CD4-positive, alpha-beta memory T cell (primary cell): ENCODE measurements at regions of chrX and their contacts with region 1.

Region 1: GRCh38 chrX:48043056-48043455 is 28.4 kb downstream of the ZNF630 start:
- DNase-seq: no peak
- H3K4me3 ChIP-seq: no peak overlapping the region
- H3K4me3 Mint-ChIP-seq: no peak overlapping the region
- H3K27ac ChIP-seq: no peak overlapping the region
- H3K27ac Mint-ChIP-seq: no peak overlapping the region
- H3K4me1 ChIP-seq: no peaks in the 10 kb centered on the region
- H3K4me1 Mint-ChIP-seq: peaks cover 0 to 2% (median 0%) of the 10 kb centered on the region in 4 donors
- H3K27me3 ChIP-seq: no peaks in the 10 kb centered on the region
- H3K27me3 Mint-ChIP-seq: no peaks in the 10 kb centered on the region

Region 2: GRCh38 chrX:48028091-48028490 is 15.0 kb before region 1 on chrX:
- CTCF ChIA-PET with region 1: interaction called, 11 read pairs
- POLR2A ChIA-PET with region 1: no interaction called
- intact Hi-C with region 1: no loop called
- DNase-seq: no peak
- H3K4me3 ChIP-seq: no peak overlapping the region
- H3K4me3 Mint-ChIP-seq: no peak overlapping the region
- H3K27ac ChIP-seq: no peak overlapping the region
- H3K27ac Mint-ChIP-seq: no peak overlapping the region
- H3K4me1 ChIP-seq: no peaks in the 10 kb centered on the region
- H3K4me1 Mint-ChIP-seq: peaks cover 4 to 12% (median 8%) of the 10 kb centered on the region in 4 donors
- H3K27me3 ChIP-seq: no peaks in the 10 kb centered on the region
- H3K27me3 Mint-ChIP-seq: no peaks in the 10 kb centered on the region